ENCODE measurements at regions of chr2 and their contacts with region 1.

Region 1: GRCh38 chr2:108583903-108584520 is 49.7 kb downstream of the LIMS1 start:
- DNase-seq: no peak
- ATAC-seq: peak; percentile 72
- H3K4me3 Mint-ChIP-seq: no peak overlapping the region
- H3K27ac Mint-ChIP-seq: peak overlapping the region; percentile 51
- H3K4me1 Mint-ChIP-seq: peaks cover 60% of the 10 kb centered on the region
- H3K27me3 Mint-ChIP-seq: no peaks in the 10 kb centered on the region
- CTCF ChIP-seq: no peak

Region 2: GRCh38 chr2:106582148-106583143 is 2001.6 kb before region 1 on chr2:
- CTCF ChIA-PET with region 1: no interaction called
- POLR2A ChIA-PET with region 1: no interaction called
- intact Hi-C with region 1: loop called (anchors 5 kb)
- DNase-seq: peak; percentile 37
- ATAC-seq: peak; percentile 83
- H3K4me3 Mint-ChIP-seq: peak overlapping the region; percentile 86
- H3K27ac Mint-ChIP-seq: no peak overlapping the region
- H3K4me1 Mint-ChIP-seq: peaks cover 11% of the 10 kb centered on the region
- H3K27me3 Mint-ChIP-seq: peaks cover 27% of the 10 kb centered on the region
- CTCF ChIP-seq: peak; percentile 89

Region 3: DNA sequence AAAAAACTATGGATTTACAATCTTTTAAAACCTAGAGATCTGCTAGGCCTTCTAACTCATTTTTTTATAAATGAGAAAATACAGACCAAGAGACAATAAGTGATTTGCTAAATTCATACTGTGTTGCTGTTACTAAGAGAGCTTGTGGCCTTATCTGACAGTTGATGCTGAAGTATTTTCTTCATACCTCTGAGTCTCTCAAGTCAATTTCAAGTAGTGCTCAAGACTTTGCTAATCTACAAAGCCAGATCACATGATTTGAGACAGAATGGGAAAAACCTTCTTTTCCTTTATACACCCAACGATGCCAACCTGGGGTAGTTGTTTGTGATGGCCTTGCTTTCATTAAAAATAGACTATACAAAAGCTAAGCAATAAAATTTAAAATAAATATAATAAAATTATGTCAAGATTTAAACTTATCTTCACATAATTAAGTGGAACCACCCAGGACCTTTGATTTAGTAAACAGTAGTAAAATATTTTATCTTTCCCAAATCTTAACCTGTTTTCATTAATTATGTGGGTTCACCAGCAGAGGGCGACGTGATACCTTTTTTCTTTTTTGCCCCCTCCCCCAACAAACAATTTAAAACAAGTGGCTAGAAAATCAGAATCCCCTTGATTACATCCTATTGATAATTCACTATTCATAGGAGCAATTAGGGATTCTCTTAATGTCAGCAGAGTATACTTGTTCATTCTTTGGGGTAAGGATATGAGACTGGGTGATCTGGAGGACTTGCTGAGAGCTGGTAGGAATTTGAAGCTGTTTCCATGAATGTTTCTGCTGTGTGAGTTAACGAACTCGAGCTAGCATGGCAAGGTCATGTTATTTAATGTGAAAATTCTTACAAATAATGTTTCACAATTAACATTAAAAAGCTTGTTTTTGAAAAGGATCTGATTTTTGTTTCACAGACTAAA is 647.3 kb before region 1 on chr2:
- CTCF ChIA-PET with region 1: interaction called, 3 read pairs
- POLR2A ChIA-PET with region 1: no interaction called
- intact Hi-C with region 1: loop called (anchors 2 kb)
- DNase-seq: no peak
- ATAC-seq: no peak
- H3K4me3 Mint-ChIP-seq: no peak overlapping the region
- H3K27ac Mint-ChIP-seq: no peak overlapping the region
- H3K4me1 Mint-ChIP-seq: no peaks in the 10 kb centered on the region
- H3K27me3 Mint-ChIP-seq: no peaks in the 10 kb centered on the region
- CTCF ChIP-seq: no peak

Region 4: GRCh38 chr2:108215794-108216211 is 368.2 kb before region 1 on chr2:
- CTCF ChIA-PET with region 1: no interaction called
- POLR2A ChIA-PET with region 1: no interaction called
- intact Hi-C with region 1: loop called (anchors 5 kb)
- DNase-seq: no peak
- ATAC-seq: no peak
- H3K4me3 Mint-ChIP-seq: no peak overlapping the region
- H3K27ac Mint-ChIP-seq: no peak overlapping the region
- H3K4me1 Mint-ChIP-seq: no peaks in the 10 kb centered on the region
- H3K27me3 Mint-ChIP-seq: peaks cover 2% of the 10 kb centered on the region
- CTCF ChIP-seq: no peak

Region 5: DNA sequence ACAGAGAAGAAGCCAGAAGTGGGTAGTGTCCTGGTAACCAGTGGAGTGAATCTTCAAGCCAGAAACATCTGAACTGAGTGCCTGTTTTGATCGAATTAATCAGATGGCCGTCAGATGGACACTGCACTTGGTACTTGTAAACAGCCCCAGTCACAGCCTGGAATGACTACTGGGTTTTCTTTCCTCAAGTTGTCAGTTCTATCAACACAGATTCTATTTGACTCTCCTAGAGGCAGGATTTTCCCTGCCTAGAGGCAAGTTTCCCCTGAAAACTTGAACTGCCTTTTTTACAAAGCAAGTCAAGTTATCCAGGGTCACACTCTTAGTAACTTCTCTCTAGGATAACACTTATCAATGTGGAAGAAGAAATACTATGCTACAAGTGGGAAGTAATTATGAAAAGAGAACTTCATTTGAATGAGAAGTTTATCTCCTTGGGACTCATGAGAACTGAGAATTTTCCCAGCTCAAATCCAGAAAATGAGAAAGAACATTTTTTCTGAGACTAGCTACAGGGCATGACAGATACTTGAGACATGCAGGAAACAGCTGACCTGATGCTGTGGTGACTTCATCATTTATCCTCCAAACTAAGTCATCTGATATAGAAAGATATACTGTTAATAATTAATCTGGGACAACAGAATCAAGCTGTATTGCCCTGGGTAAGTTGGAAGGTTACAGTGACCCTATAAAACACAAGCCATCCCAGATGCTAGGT is 259.3 kb before region 1 on chr2:
- CTCF ChIA-PET with region 1: no interaction called
- POLR2A ChIA-PET with region 1: no interaction called
- intact Hi-C with region 1: no loop called
- DNase-seq: no peak
- ATAC-seq: no peak
- H3K4me3 Mint-ChIP-seq: no peak overlapping the region
- H3K27ac Mint-ChIP-seq: no peak overlapping the region
- H3K4me1 Mint-ChIP-seq: no peaks in the 10 kb centered on the region
- H3K27me3 Mint-ChIP-seq: no peaks in the 10 kb centered on the region
- CTCF ChIP-seq: no peak

Region 6: GRCh38 chr2:108448678-108449493 is 135.1 kb before region 1 on chr2 and contains the start of gene GCC2:
- CTCF ChIA-PET with region 1: interaction called, 3 read pairs
- POLR2A ChIA-PET with region 1: no interaction called
- intact Hi-C with region 1: loop called (anchors 1 kb)
- DNase-seq: peak; percentile 96
- ATAC-seq: peak; percentile 96
- H3K4me3 Mint-ChIP-seq: peak within 1 kb of the TSS; percentile 98
- H3K27ac Mint-ChIP-seq: peak within 1 kb of the TSS; percentile 96
- H3K4me1 Mint-ChIP-seq: peaks cover 53% of the 10 kb centered on the region
- H3K27me3 Mint-ChIP-seq: no peaks in the 10 kb centered on the region
- CTCF ChIP-seq: no peak
- total RNA-seq, gene GCC2: 44.0 and 53.8 TPM in 2 replicates

Region 7: DNA sequence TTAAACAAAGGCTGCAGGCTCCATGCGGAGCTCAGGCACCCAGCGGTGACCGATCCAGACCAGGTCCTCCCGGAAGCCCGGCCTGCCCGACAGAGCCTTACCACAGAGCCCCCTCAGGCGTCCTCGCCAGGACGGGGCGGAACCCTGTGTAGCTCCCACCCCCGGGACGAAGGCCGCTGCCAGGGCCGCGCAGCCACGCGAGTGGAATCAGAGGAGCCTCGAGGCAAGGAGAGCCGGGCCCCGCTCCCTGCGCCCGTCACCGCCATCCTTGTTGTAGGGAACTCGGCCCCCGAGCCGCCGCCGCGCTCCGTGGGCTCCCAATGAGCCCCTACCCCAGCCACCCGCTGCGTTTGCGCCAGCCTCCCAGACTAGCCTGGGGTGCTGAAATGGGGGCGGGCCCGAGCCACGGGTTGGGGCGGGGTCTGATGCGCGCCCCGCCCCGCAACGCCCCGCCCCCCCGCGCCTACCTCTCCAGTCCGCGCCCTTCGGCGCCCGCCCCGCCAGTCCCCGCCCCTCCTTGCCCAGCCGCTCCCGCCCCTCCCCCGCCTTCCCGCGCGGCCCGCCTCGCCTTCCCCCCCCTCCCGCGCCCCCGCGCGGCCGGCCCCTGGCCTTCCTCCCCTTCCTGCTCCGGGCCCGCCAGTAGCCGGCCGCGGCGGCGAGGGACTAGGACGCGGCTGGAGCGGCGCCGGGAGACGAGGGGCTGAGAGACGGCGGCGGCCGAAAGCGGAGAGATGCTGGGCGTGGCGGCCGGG is 50.0 kb before region 1 on chr2 and contains the start of gene LIMS1:
- CTCF ChIA-PET with region 1: interaction called, 5 read pairs
- POLR2A ChIA-PET with region 1: interaction called, 10 read pairs
- intact Hi-C with region 1: loop called (anchors 2 kb)
- DNase-seq: peak; percentile 77
- ATAC-seq: peak; percentile 91
- H3K4me3 Mint-ChIP-seq: peak within 1 kb of the TSS; percentile 93
- H3K27ac Mint-ChIP-seq: peak within 1 kb of the TSS; percentile 88
- H3K4me1 Mint-ChIP-seq: peaks cover 30% of the 10 kb centered on the region
- H3K27me3 Mint-ChIP-seq: no peaks in the 10 kb centered on the region
- CTCF ChIP-seq: no peak
- total RNA-seq, gene LIMS1: 33.3 and 34.8 TPM in 2 replicates

Region 8: GRCh38 chr2:108607706-108608301 is 23.8 kb after region 1 on chr2:
- CTCF ChIA-PET with region 1: interaction called, 5 read pairs
- POLR2A ChIA-PET with region 1: interaction called, 5 read pairs
- intact Hi-C with region 1: loop called (anchors 2 kb)
- DNase-seq: no peak
- ATAC-seq: no peak
- H3K4me3 Mint-ChIP-seq: no peak overlapping the region
- H3K27ac Mint-ChIP-seq: no peak overlapping the region
- H3K4me1 Mint-ChIP-seq: peaks cover 46% of the 10 kb centered on the region
- H3K27me3 Mint-ChIP-seq: no peaks in the 10 kb centered on the region
- CTCF ChIP-seq: no peak

Region 9: GRCh38 chr2:108869542-108869941 is 285.5 kb after region 1 on chr2:
- CTCF ChIA-PET with region 1: no interaction called
- POLR2A ChIA-PET with region 1: no interaction called
- intact Hi-C with region 1: no loop called
- DNase-seq: no peak
- ATAC-seq: no peak
- H3K4me3 Mint-ChIP-seq: no peak overlapping the region
- H3K27ac Mint-ChIP-seq: no peak overlapping the region
- H3K4me1 Mint-ChIP-seq: no peaks in the 10 kb centered on the region
- H3K27me3 Mint-ChIP-seq: no peaks in the 10 kb centered on the region
- CTCF ChIP-seq: no peak